Common myeloid progenitor, CD34-positive (primary cell): ENCODE measurements at regions of chr17 and their contacts with region 1.

Region 1: DNA sequence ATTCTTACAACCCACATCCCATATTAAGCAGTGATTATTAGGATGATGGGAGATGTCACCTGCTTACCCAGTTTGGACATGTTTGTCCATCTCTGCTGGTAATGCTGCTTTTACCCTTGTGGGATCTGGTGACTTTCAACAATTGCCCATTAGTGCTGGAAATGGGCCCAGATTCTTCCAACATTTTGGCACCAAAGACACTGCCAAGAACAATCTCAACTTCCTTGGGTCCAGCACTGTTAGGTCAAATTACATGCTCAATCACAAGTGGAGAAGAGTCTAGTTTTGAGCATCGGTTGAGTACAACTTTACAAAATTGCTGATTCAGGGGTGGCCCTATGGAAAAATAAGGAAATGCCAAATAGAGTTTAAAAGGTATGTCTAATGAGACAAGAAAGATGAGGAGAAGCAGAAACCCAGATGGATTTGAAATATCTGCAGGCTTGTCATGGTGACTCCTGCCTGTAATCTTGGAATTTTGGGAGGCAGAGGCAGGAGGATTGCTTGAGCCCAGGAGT is 13.0 kb upstream of the ZFP3 start:
- DNase-seq: no peak
- H3K4me3 ChIP-seq: no peak overlapping the region
- H3K27ac ChIP-seq: no peak overlapping the region
- H3K4me1 ChIP-seq: no peaks in the 10 kb centered on the region
- H3K27me3 ChIP-seq: peaks cover 0 to 4% (median 0%) of the 10 kb centered on the region in 5 experiments

Region 2: DNA sequence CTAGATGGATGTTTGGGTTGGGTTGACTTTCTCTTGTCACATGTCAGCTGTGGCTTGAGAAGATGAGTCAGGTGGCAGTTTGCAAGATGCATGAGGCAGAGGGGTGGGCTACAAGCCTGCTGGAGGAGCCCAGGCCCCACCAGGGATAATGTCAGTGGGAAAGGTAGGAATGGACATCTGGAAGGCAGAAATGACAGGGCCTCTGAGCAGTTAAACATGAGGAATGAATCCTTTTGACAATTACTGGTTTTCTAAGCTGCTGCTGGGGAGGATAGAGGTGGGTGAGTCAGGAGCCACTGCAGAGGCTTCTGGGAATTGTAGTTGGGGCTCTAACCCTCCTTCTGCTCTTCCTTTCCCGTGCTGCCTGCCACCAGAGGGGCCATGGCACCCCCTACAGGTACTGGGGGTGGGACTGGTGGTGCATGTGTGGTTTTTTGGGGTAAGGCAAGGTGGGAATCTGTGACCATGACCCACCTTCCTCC is 45.8 kb before region 1 on chr17:
- CTCF ChIA-PET with region 1: interaction called, 13 read pairs
- POLR2A ChIA-PET with region 1: no interaction called
- DNase-seq: peak; percentile 65 to 79 (median 77)
- H3K4me3 ChIP-seq: no peak overlapping the region
- H3K27ac ChIP-seq: no peak overlapping the region
- H3K4me1 ChIP-seq: peaks cover 0 to 16% (median 1%) of the 10 kb centered on the region in 4 experiments
- H3K27me3 ChIP-seq: peaks cover 0 to 55% (median 5%) of the 10 kb centered on the region in 5 experiments

Region 3: DNA sequence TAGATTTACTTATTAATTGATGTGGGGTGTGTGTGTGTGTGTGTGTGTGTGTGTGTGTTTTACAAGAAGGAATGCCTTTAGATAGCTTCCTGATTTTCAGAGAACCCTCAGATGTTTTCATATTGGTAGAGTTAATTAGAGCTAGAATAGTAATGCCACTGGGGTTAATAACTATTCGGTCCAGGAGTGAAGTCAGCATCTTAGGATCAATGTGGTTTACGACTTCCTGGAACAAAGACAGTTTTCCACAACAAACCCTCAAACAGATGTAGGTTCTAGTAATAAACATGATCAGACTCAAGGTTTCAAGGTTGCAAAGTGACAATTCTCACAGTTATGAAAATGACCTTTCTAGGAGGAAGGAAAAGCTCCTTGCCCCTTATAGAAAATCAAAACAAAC is 17.8 kb before region 1 on chr17:
- CTCF ChIA-PET with region 1: interaction called, 12 read pairs
- POLR2A ChIA-PET with region 1: no interaction called
- DNase-seq: no peak
- H3K4me3 ChIP-seq: no peak overlapping the region
- H3K27ac ChIP-seq: no peak overlapping the region
- H3K4me1 ChIP-seq: no peaks in the 10 kb centered on the region
- H3K27me3 ChIP-seq: peaks cover 0 to 4% (median 0%) of the 10 kb centered on the region in 5 experiments